WTC11 (cell line): ENCODE measurements at regions of chrX and their contacts with region 1.

Region 1: GRCh38 chrX:107776649-107777535 is 641 bp upstream of the NCBP2L start:
- DNase-seq: peak; percentile 67
- ATAC-seq: peak; percentile 72
- H3K4me3 Mint-ChIP-seq: peak overlapping the region; percentile 81
- H3K27ac Mint-ChIP-seq: no peak overlapping the region
- H3K4me1 Mint-ChIP-seq: peaks cover 30% of the 10 kb centered on the region
- H3K27me3 Mint-ChIP-seq: peaks cover 31% of the 10 kb centered on the region
- CTCF ChIP-seq: peak; percentile 35; the same call in 1 of the 2 replicates

Region 2: DNA sequence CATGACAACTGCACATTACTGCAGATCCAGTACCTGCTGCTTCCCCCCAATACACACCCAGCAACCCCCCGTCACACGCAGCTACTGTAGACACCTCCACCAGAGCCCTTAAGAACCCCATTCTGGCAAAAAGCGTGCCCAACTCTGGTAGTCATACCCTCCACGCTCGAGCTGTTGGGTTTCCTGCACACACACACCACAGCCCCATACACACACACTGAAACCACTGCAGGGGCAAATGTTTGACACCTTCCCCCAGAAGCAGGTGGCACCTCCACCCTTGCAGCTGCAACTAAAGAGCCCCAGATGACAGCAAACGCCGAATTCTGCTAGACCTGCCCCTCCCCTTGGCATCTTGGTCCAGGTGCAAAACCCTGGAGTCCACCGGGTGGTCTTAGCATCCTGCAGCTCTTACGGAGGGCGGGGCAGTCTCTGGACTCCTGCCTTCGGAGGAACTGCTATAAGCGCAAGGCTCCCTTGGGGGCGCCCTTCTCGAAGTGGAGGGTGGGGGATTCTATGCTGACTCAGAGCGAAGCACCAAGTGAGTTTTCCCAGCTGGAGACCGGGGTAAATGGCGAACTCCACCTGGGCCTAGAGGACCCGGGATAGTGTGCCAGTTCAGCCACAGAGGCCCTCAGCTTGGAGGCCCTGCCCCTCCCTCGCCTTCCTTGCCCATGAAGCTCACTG is 325.9 kb before region 1 on chrX:
- CTCF ChIA-PET with region 1: interaction called, 10 read pairs
- POLR2A ChIA-PET with region 1: no interaction called
- DNase-seq: peak; percentile 76
- ATAC-seq: peak; percentile 65
- H3K4me3 Mint-ChIP-seq: peak overlapping the region; percentile 76
- H3K27ac Mint-ChIP-seq: no peak overlapping the region; the same call in 1 of the 2 replicates
- H3K4me1 Mint-ChIP-seq: peaks cover 17% of the 10 kb centered on the region
- H3K27me3 Mint-ChIP-seq: peaks cover 36% of the 10 kb centered on the region
- CTCF ChIP-seq: peak; percentile 34; the same call in 1 of the 2 replicates

Region 3: DNA sequence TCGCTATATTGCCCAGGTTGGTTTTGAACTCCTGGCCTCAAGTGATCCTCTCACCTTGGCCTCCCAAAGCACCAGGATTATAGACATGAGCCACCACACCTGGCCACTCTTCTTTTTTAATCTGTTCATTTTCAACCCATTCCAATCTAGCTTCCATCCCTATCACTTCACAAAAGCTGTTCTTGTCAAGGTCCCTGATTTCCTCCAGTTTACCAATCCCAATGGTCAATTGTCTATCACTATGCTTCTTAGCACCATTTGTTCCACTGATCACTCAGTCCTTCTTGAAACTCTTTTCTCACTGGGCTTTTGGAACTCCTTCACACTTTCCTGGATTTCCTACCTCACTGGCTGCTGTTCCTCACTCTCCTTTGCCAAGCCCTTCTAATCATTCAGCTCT is 110.0 kb before region 1 on chrX:
- CTCF ChIA-PET with region 1: interaction called, 108 read pairs
- POLR2A ChIA-PET with region 1: no interaction called
- DNase-seq: no peak
- ATAC-seq: no peak
- H3K4me3 Mint-ChIP-seq: no peak overlapping the region
- H3K27ac Mint-ChIP-seq: no peak overlapping the region
- H3K4me1 Mint-ChIP-seq: peaks cover 12% of the 10 kb centered on the region
- H3K27me3 Mint-ChIP-seq: no peaks in the 10 kb centered on the region
- CTCF ChIP-seq: no peak

Region 4: DNA sequence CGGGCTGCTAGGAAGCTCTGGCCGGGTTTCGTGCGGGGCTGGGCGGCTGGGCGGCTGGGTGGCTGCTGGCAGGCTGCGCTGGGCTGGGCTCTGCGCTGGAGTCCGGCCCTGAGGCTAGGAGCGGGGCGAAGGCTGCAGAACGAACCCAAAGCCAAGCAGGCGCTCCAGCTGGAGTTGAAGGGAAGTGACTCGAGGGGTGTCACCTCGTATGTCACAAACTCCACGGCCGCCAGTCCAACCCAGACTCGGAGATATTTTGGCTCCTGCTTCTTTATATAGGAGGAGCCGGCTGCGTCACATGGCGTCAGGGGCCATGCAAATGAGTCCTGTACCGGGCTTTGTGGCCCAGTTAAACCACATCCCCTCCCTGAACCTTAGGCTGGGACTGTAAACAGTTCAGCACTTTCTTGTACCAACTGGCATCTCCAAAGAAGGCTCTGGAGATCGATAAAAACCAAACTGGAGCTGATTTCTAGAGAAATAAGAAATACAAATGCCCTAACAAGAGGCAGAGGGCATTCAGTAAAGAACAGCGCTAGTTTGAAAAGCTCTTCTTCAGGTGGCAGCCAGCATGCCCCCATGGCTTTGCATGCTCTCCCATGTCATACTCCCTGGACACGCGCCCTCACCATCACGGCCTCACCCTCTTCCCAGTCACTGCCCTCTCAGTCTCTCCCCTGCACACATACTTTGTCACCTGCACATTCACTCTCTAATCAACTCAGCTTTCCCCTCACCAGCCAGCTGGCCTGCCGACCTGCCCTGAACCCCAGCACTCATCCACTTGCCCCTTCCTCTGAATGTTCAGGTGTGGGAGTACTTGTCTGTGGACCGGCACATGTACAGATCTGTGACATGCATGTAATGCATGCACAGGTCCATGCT is 59.8 kb before region 1 on chrX:
- CTCF ChIA-PET with region 1: interaction called, 29 read pairs
- POLR2A ChIA-PET with region 1: interaction called, 21 read pairs
- DNase-seq: peak; percentile 42
- ATAC-seq: peak; percentile 43
- H3K4me3 Mint-ChIP-seq: peak overlapping the region; percentile 78
- H3K27ac Mint-ChIP-seq: peak overlapping the region; percentile 31
- H3K4me1 Mint-ChIP-seq: peaks cover 37% of the 10 kb centered on the region
- H3K27me3 Mint-ChIP-seq: no peaks in the 10 kb centered on the region
- CTCF ChIP-seq: no peak

Region 5: GRCh38 chrX:107741404-107741790 is 35.5 kb before region 1 on chrX:
- CTCF ChIA-PET with region 1: interaction called, 18 read pairs
- POLR2A ChIA-PET with region 1: no interaction called
- DNase-seq: no peak
- ATAC-seq: peak; percentile 18
- H3K4me3 Mint-ChIP-seq: peak overlapping the region; percentile 86
- H3K27ac Mint-ChIP-seq: peak overlapping the region; percentile 89
- H3K4me1 Mint-ChIP-seq: peaks cover 31% of the 10 kb centered on the region
- H3K27me3 Mint-ChIP-seq: peaks cover 9% of the 10 kb centered on the region; the same call in 1 of the 2 replicates
- CTCF ChIP-seq: no peak

Region 6: DNA sequence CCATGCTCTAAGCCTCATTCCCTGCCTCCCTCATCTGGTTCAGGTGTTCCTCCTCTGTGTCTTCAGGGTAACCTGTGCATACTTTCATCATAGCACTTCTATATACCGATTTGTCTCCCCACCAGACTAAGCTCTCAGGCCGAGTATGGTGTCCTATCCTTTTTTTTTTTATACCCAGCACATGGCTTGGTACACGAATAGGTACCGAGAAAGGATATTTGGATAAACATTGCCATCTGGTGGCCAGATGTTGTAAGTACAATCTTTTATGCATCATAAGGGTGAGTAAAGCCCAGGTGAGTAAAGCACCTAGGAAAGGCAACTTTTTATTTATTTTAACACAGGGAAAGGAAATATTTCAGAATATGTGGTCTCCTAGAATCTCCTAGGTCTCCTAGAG is 117.1 kb after region 1 on chrX:
- CTCF ChIA-PET with region 1: interaction called, 12 read pairs
- POLR2A ChIA-PET with region 1: interaction called, 3 read pairs
- DNase-seq: no peak
- ATAC-seq: peak; percentile 76
- H3K4me3 Mint-ChIP-seq: no peak overlapping the region
- H3K27ac Mint-ChIP-seq: no peak overlapping the region
- H3K4me1 Mint-ChIP-seq: peaks cover 21% of the 10 kb centered on the region
- H3K27me3 Mint-ChIP-seq: peaks cover 6% of the 10 kb centered on the region
- CTCF ChIP-seq: peak; percentile 36; the same call in 1 of the 2 replicates

Region 7: GRCh38 chrX:108186811-108187210 is 409.9 kb after region 1 on chrX:
- CTCF ChIA-PET with region 1: no interaction called
- POLR2A ChIA-PET with region 1: no interaction called
- DNase-seq: no peak
- ATAC-seq: no peak
- H3K4me3 Mint-ChIP-seq: no peak overlapping the region
- H3K27ac Mint-ChIP-seq: no peak overlapping the region
- H3K4me1 Mint-ChIP-seq: peaks cover 2% of the 10 kb centered on the region; the same call in 1 of the 2 replicates
- H3K27me3 Mint-ChIP-seq: no peaks in the 10 kb centered on the region
- CTCF ChIP-seq: no peak